ENCODE measurements at regions of chr17 and their contacts with region 1.

Region 1: DNA sequence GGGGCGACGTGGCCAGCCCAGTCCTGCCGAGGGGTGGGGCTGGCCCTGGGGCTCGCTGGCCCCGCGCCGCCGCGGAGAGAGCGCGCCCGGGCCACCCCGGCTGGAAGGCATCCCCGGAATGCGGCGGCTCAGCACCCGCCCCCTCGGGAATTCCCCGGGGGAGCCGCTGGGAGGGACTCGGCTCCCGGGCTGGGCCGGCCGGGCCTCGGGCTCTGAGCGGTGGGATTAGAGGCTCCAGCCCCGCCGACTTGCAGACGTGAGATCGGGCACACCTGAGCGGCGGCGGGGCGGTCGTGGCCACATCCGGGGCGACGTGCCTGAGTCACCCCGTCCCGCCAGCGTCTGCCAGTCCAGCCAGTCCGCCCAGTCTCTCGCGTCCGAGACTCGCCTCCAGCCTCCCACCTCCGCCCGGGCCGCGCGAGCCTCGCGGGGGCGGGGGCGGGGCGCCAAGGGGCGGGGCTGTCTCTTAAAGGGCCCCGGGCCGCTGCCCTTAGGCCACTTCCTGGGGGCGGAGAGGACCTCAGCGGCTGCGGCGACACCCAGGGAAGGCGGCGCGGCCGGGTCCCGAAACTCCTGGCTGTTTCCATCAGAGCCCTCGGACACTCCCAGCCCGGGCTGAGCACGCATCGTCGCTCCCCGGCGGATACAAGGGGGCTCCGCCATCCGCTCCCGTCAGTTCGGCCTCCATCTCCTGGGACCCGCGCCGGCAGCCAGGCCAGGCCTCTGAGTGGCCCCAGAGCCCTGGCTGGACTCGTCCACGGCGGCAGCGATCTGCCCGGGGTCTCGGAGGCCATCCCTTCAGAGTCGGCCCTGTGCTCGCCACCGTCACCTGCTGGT is at the start of gene KCTD11:
- DNase-seq: peak; percentile 64 to 88 (median 68)
- H3K4me3 ChIP-seq: peak within 1 kb of the TSS; percentile 29 to 49
- H3K4me3 Mint-ChIP-seq: peak within 1 kb of the TSS; percentile 80 to 95 (median 84)
- H3K27ac ChIP-seq: peak within 1 kb of the TSS; percentile 68
- H3K27ac Mint-ChIP-seq: peak within 1 kb of the TSS; percentile 62 to 95 (median 87)
- H3K4me1 ChIP-seq: peaks cover 44% of the 10 kb centered on the region
- H3K4me1 Mint-ChIP-seq: peaks cover 21 to 61% (median 40%) of the 10 kb centered on the region in 4 donors
- H3K27me3 ChIP-seq: no peaks in the 10 kb centered on the region
- H3K27me3 Mint-ChIP-seq: no peaks in the 10 kb centered on the region
- total RNA-seq, gene KCTD11: 3.5 to 4.3 TPM

Region 2: DNA sequence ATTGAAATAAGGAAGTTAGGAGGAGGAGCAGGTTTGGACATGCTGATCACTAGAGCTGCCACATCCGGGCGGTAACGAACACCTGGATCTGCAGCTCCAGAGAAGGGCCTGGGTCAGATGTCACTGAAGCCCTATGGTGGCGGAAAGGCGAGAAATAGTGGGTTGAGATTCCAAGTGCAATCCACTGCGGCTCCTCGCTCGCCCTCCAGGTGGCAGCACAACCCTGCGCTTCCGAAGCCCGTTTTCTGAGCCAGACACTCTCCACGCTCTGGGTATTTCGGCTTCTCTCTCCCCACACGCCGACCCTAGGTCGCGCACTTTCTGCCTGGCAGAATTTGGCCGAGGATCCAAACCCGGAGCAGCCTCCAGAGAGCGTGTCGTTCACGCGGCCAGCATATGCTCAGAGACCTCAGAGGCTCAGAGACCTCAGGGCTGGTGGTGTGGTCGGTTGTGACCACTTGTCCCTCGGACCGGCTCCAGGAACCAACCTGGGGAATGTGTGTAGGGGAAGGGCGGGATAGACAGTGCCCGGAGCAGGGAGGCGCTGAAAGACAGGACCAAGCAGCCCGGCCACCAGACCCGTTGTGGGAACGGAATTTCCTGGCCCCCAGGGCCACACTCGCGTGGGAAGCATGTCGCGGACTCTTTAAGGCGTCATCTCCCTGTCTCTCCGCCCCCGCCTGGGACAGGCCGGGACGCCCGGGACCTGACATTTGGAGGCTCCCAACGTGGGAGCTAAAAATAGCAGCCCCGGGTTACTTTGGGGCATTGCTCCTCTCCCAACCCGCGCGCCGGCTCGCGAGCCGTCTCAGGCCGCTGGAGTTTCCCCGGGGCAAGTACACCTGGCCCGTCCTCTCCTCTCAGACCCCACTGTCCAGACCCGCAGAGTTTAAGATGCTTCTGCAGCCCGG is 71.1 kb before region 1 on chr17:
- CTCF ChIA-PET with region 1: interaction called, 6 read pairs
- POLR2A ChIA-PET with region 1: interaction called, 4 read pairs
- intact Hi-C with region 1: loop called (anchors 1 kb)
- DNase-seq: peak; percentile 82 to 86 (median 85)
- H3K4me3 ChIP-seq: peak overlapping the region; percentile 23 to 58
- H3K4me3 Mint-ChIP-seq: peak overlapping the region; percentile 77 to 90 (median 82)
- H3K27ac ChIP-seq: peak overlapping the region; percentile 41
- H3K27ac Mint-ChIP-seq: peak overlapping the region; percentile 36 to 84 (median 66)
- H3K4me1 ChIP-seq: peaks cover 25% of the 10 kb centered on the region
- H3K4me1 Mint-ChIP-seq: peaks cover 4 to 28% (median 18%) of the 10 kb centered on the region in 4 donors
- H3K27me3 ChIP-seq: peaks cover 10% of the 10 kb centered on the region
- H3K27me3 Mint-ChIP-seq: peaks cover 15 to 19% of the 10 kb centered on the region in 2 donors

Region 3: DNA sequence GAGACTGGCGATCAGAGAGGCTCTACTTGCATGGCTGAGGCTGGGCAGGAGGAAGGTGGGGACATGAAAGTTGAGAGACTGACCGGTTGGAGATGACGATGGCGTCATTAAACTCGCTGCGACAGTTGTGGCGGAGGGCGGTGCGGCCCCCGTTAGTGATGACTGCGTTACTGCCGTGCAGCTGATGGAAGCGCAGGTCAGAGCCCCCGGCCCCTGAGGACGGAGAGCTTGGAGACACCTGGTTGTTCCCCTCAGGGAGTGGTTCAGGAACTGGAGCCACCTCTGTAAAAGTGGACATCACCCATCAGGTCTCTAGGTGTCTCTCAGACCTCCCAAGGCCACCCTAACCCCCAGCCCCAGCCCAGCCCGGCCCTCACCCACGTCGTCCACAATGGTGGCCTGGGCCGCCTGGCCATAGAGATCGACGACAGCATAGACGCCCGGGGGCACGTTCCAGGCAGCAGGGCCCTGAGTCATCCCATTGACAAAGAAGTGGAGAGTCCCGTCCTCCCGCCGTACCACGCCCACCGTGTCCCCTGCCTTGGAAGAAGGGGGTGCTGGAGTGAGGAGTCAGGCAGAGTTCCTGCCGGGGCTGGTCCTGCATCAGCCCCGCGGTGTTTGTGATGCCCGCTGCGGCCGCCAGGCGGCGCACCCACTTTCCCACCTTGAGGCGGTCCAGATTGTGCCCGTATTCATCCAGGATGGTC is 28.0 kb before region 1 on chr17:
- CTCF ChIA-PET with region 1: interaction called, 31 read pairs
- POLR2A ChIA-PET with region 1: interaction called, 56 read pairs
- intact Hi-C with region 1: loop called (anchors 1 kb)
- DNase-seq: peak; percentile 50 to 72 (median 56)
- H3K4me3 ChIP-seq: no peak overlapping the region
- H3K4me3 Mint-ChIP-seq: no peak overlapping the region
- H3K27ac ChIP-seq: no peak overlapping the region
- H3K27ac Mint-ChIP-seq: peak overlapping the region in 3 of 7 donors; percentile 18 to 78 (median 55)
- H3K4me1 ChIP-seq: peaks cover 20% of the 10 kb centered on the region
- H3K4me1 Mint-ChIP-seq: peaks cover 17 to 28% (median 18%) of the 10 kb centered on the region in 4 donors
- H3K27me3 ChIP-seq: no peaks in the 10 kb centered on the region
- H3K27me3 Mint-ChIP-seq: no peaks in the 10 kb centered on the region

Region 4: DNA sequence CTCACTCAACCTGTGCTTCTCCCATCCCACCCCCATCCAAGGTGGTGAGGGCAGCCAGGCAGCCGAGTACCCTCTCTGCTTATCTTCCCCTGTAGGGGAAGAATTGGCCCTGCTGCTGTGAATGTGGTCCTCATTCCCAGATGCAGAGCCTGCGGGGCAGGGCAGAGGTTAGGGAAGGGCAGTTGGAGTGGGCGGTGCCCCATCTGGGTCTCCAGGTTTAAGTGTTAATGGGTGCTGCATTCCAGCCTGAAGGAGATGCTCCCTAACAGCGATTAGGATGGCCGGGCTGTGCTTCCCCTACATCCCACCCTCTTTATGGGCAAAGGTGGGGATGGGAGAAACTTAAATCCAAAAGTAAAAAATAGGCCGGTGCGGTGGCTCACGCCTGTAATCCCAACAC is 15.2 kb after region 1 on chr17:
- CTCF ChIA-PET with region 1: interaction called, 30 read pairs
- POLR2A ChIA-PET with region 1: interaction called, 3 read pairs
- intact Hi-C with region 1: no loop called
- DNase-seq: no peak
- H3K4me3 ChIP-seq: no peak overlapping the region
- H3K4me3 Mint-ChIP-seq: no peak overlapping the region
- H3K27ac ChIP-seq: no peak overlapping the region
- H3K27ac Mint-ChIP-seq: no peak overlapping the region
- H3K4me1 ChIP-seq: no peaks in the 10 kb centered on the region
- H3K4me1 Mint-ChIP-seq: peaks cover 0 to 1% (median 0%) of the 10 kb centered on the region in 4 donors
- H3K27me3 ChIP-seq: no peaks in the 10 kb centered on the region
- H3K27me3 Mint-ChIP-seq: peaks cover 4 to 6% of the 10 kb centered on the region in 2 donors

Region 5: DNA sequence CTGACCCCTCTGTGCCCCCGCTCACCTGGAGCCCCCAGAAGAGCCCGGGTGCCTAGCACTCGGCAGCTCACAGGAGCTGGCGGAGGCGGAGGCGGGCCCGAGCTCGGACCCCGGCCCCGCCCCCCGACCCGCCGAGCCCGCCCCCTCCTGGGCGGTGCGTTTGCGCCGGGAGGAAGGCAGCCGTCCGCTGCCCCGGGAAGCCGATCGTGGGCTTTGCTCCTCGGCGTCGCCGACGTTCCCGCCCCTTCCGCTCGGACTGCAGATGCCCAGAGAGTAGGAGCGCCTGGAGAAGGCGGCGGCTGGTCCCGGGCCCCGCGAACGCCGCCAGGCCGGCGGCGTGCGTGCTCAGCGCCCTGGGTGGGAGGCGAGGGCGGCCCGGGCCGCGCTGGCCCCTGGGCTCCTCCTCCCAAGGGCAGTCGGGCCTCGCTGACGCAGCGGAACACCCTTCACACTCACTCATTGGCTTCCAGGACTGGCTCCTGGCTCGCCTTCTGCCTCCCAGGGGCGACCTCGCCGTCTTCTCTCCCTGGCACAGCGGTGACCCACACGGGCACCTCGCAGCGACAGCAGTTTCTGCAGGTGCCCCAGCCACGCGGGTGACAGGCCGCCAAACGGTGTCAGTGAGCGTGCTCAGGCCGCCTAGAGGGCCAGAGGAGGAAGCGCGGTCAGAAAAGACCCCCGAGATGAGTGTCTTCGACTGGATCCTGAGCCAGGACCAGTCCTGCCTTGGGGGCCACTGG is 42.7 kb after region 1 on chr17 and contains the start of gene PLSCR3:
- CTCF ChIA-PET with region 1: interaction called, 14 read pairs
- POLR2A ChIA-PET with region 1: interaction called, 9 read pairs
- intact Hi-C with region 1: loop called (anchors 5 kb)
- DNase-seq: peak; percentile 76 to 88 (median 83)
- H3K4me3 ChIP-seq: peak within 1 kb of the TSS; percentile 78 to 94
- H3K4me3 Mint-ChIP-seq: peak within 1 kb of the TSS; percentile 93 to 97 (median 96)
- H3K27ac ChIP-seq: peak within 1 kb of the TSS; percentile 91
- H3K27ac Mint-ChIP-seq: peak within 1 kb of the TSS; percentile 92 to 98 (median 94)
- H3K4me1 ChIP-seq: peaks cover 44% of the 10 kb centered on the region
- H3K4me1 Mint-ChIP-seq: peaks cover 13 to 44% (median 31%) of the 10 kb centered on the region in 4 donors
- H3K27me3 ChIP-seq: no peaks in the 10 kb centered on the region
- H3K27me3 Mint-ChIP-seq: no peaks in the 10 kb centered on the region
- total RNA-seq, gene PLSCR3: 90.3 to 91.9 TPM

Region 6: GRCh38 chr17:7515911-7516610 is 164.2 kb after region 1 on chr17:
- CTCF ChIA-PET with region 1: interaction called, 19 read pairs
- POLR2A ChIA-PET with region 1: no interaction called
- intact Hi-C with region 1: no loop called
- DNase-seq: no peak
- H3K4me3 ChIP-seq: no peak overlapping the region
- H3K4me3 Mint-ChIP-seq: no peak overlapping the region
- H3K27ac ChIP-seq: no peak overlapping the region
- H3K27ac Mint-ChIP-seq: peak overlapping the region in 4 of 7 donors; percentile 17 to 74 (median 50)
- H3K4me1 ChIP-seq: no peaks in the 10 kb centered on the region
- H3K4me1 Mint-ChIP-seq: peaks cover 0 to 2% (median 0%) of the 10 kb centered on the region in 4 donors
- H3K27me3 ChIP-seq: no peaks in the 10 kb centered on the region
- H3K27me3 Mint-ChIP-seq: no peaks in the 10 kb centered on the region

Measured in CD4-positive, alpha-beta memory T cell (primary cell).